Naive thymus-derived CD4-positive, alpha-beta T cell (primary cell): ENCODE measurements at regions of chr5 and their contacts with region 1.

Region 1: GRCh38 chr5:88883059-88883835 is at the start of gene MEF2C:
- DNase-seq: no peak
- ATAC-seq: peak; percentile 75
- H3K4me3 ChIP-seq: peak within 1 kb of the TSS; percentile 41
- H3K4me3 Mint-ChIP-seq: peak within 1 kb of the TSS; percentile 82 to 94 (median 88)
- H3K27ac ChIP-seq: no peak within 1 kb of the TSS
- H3K27ac Mint-ChIP-seq: peak within 1 kb of the TSS in 1 of 9 donors; percentile 24
- H3K4me1 ChIP-seq: peaks cover 0 to 6% of the 10 kb centered on the region in 2 donors
- H3K4me1 Mint-ChIP-seq: peaks cover 17 to 29% (median 26%) of the 10 kb centered on the region in 7 donors
- H3K27me3 ChIP-seq: peaks cover 0 to 5% of the 10 kb centered on the region in 2 donors
- H3K27me3 Mint-ChIP-seq: peaks cover 34 to 81% (median 44%) of the 10 kb centered on the region in 5 donors
- total RNA-seq, gene MEF2C: 0.07 to 40.0 (median 3.4) TPM

Region 2: GRCh38 chr5:88666761-88667495 is 216.3 kb before region 1 on chr5:
- CTCF ChIA-PET with region 1: no interaction called
- POLR2A ChIA-PET with region 1: no interaction called
- intact Hi-C with region 1: loop called in 1 of 2 experiments (anchors 5 kb)
- DNase-seq: no peak
- ATAC-seq: no peak
- H3K4me3 ChIP-seq: peak overlapping the region; percentile 45
- H3K4me3 Mint-ChIP-seq: peak overlapping the region; percentile 75 to 88 (median 86)
- H3K27ac ChIP-seq: no peak overlapping the region
- H3K27ac Mint-ChIP-seq: peak overlapping the region in 3 of 9 donors; percentile 0 to 6 (median 3)
- H3K4me1 ChIP-seq: peaks cover 7 to 8% of the 10 kb centered on the region in 2 donors
- H3K4me1 Mint-ChIP-seq: peaks cover 11 to 34% (median 25%) of the 10 kb centered on the region in 7 donors
- H3K27me3 ChIP-seq: peaks cover 12 to 29% of the 10 kb centered on the region in 2 donors
- H3K27me3 Mint-ChIP-seq: peaks cover 92 to 98% (median 93%) of the 10 kb centered on the region in 5 donors

Region 3: GRCh38 chr5:88826646-88827585 is 56.3 kb before region 1 on chr5:
- CTCF ChIA-PET with region 1: no interaction called
- POLR2A ChIA-PET with region 1: no interaction called
- intact Hi-C with region 1: loop called in 1 of 2 experiments (anchors 5 kb)
- DNase-seq: peak in 1 of 9 donors; percentile 5
- ATAC-seq: peak; percentile 84
- H3K4me3 ChIP-seq: no peak overlapping the region
- H3K4me3 Mint-ChIP-seq: peak overlapping the region; percentile 21 to 78 (median 48)
- H3K27ac ChIP-seq: no peak overlapping the region
- H3K27ac Mint-ChIP-seq: peak overlapping the region in 3 of 9 donors; percentile 18 to 65 (median 58)
- H3K4me1 ChIP-seq: peaks cover 0 to 5% of the 10 kb centered on the region in 2 donors
- H3K4me1 Mint-ChIP-seq: peaks cover 14 to 52% (median 40%) of the 10 kb centered on the region in 7 donors
- H3K27me3 ChIP-seq: no peaks in the 10 kb centered on the region
- H3K27me3 Mint-ChIP-seq: peaks cover 4 to 14% (median 10%) of the 10 kb centered on the region in 5 donors